HCT116 (cell line): ENCODE measurements at regions of chr22 and their contacts with region 1.

Region 1: GRCh38 chr22:17501679-17502285 is 61.5 kb upstream of the SLC25A18 start:
- DNase-seq: peak; percentile 69
- ATAC-seq: peak; percentile 93
- H3K4me3 ChIP-seq: no peak overlapping the region
- H3K27ac ChIP-seq: no peak overlapping the region
- H3K4me1 ChIP-seq: no peaks in the 10 kb centered on the region
- H3K27me3 ChIP-seq: no peaks in the 10 kb centered on the region
- CTCF ChIP-seq: peak; percentile 55 to 69 (median 68); a peak in 5 of 6 replicates
- POLR2A ChIP-seq: no peak
- RAD21 ChIP-seq: peak; percentile 84

Region 2: GRCh38 chr22:17057959-17058814 is 443.6 kb before region 1 on chr22:
- CTCF ChIA-PET with region 1: interaction called, 14 read pairs
- POLR2A ChIA-PET with region 1: no interaction called
- RAD21 ChIA-PET with region 1: no interaction called
- intact Hi-C with region 1: no loop called
- DNase-seq: peak; percentile 45
- ATAC-seq: peak; percentile 95
- H3K4me3 ChIP-seq: no peak overlapping the region
- H3K27ac ChIP-seq: no peak overlapping the region
- H3K4me1 ChIP-seq: no peaks in the 10 kb centered on the region
- H3K27me3 ChIP-seq: no peaks in the 10 kb centered on the region
- CTCF ChIP-seq: peak; percentile 53 to 96 (median 94); a peak in 5 of 6 replicates
- POLR2A ChIP-seq: no peak
- RAD21 ChIP-seq: peak; percentile 64

Region 3: GRCh38 chr22:17084554-17085276 is 417.1 kb before region 1 on chr22 and contains the start of gene IL17RA:
- CTCF ChIA-PET with region 1: interaction called, 4 read pairs
- POLR2A ChIA-PET with region 1: no interaction called
- RAD21 ChIA-PET with region 1: no interaction called
- intact Hi-C with region 1: loop called (anchors 2 kb)
- DNase-seq: peak; percentile 66
- ATAC-seq: peak; percentile 98
- H3K4me3 ChIP-seq: peak within 1 kb of the TSS; percentile 77 to 91
- H3K27ac ChIP-seq: peak within 1 kb of the TSS; percentile 93
- H3K4me1 ChIP-seq: peaks cover 10 to 20% of the 10 kb centered on the region in 2 experiments; a peak in 3 of 4 replicates
- H3K27me3 ChIP-seq: no peaks in the 10 kb centered on the region
- CTCF ChIP-seq: no peak
- POLR2A ChIP-seq: peak; percentile 73
- RAD21 ChIP-seq: no peak
- total RNA-seq, gene IL17RA: 17.3 TPM

Region 4: DNA sequence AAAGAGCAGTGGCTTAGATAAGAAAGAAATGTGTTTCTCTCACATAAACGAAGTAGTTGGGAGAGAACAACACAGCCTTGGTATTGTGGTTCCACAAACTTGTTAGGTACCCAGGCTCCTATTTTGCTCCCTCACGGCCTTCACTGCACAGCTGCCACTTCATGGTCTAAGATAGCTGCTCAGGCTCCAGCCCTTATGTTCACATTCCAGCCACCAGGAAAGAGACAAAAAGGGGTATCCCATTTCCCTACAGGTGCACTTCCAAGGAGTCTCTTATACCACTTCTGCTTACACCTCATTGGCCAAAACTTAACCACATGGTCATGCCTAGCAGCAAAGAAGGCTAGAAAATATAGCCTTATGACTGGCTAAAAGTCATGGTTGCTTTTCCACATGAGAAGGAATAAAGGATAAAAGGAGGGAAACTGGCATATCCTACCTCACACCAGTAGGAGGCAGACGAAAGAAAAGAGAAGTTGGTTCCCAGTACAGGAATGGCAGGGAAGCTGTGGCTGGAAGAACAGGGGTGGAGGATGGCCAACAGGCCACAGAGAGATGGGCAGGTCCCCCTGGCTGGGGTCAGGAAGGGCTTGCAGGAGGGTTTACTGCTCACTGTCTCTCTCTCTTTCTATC is 337.3 kb before region 1 on chr22:
- CTCF ChIA-PET with region 1: interaction called, 15 read pairs
- POLR2A ChIA-PET with region 1: no interaction called
- RAD21 ChIA-PET with region 1: interaction called in 1 of 2 experiments, 4 read pairs
- intact Hi-C with region 1: loop called (anchors 5 kb)
- DNase-seq: peak; percentile 37
- ATAC-seq: peak; percentile 63
- H3K4me3 ChIP-seq: no peak overlapping the region
- H3K27ac ChIP-seq: no peak overlapping the region
- H3K4me1 ChIP-seq: peaks cover 9 to 10% of the 10 kb centered on the region in 2 experiments; a peak in 3 of 4 replicates
- H3K27me3 ChIP-seq: no peaks in the 10 kb centered on the region
- CTCF ChIP-seq: peak; percentile 33 to 69 (median 47); a peak in 5 of 6 replicates
- POLR2A ChIP-seq: no peak
- RAD21 ChIP-seq: no peak

Region 5: DNA sequence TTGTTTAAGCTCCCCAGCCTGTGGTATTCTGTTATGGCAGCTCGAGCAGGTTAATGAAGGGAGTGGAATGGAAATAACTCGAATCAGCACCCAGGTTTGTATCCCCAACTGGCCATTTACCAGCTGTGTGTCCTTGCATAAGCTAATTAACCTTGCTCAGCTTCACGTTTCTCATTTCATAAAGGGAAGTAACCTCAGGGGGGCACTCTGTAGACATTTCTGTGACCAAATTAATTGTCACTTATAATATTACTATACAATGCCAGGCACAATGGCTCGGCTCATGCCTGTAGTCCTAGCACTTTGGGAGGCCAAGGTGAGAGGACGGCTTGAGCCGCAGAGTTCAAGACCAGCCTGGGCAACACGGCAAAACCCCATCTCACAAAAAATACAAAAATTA is 296.4 kb before region 1 on chr22:
- CTCF ChIA-PET with region 1: interaction called, 58 read pairs
- POLR2A ChIA-PET with region 1: no interaction called
- RAD21 ChIA-PET with region 1: interaction called, 6 to 13 read pairs
- intact Hi-C with region 1: loop called (anchors 2 kb)
- DNase-seq: no peak
- ATAC-seq: peak; percentile 83
- H3K4me3 ChIP-seq: no peak overlapping the region
- H3K27ac ChIP-seq: no peak overlapping the region
- H3K4me1 ChIP-seq: no peaks in the 10 kb centered on the region
- H3K27me3 ChIP-seq: no peaks in the 10 kb centered on the region
- CTCF ChIP-seq: peak; percentile 5 to 28 (median 15); a peak in 4 of 6 replicates
- POLR2A ChIP-seq: no peak
- RAD21 ChIP-seq: peak; percentile 42

Region 6: GRCh38 chr22:17368554-17369438 is 133.0 kb before region 1 on chr22:
- CTCF ChIA-PET with region 1: interaction called, 5 read pairs
- POLR2A ChIA-PET with region 1: no interaction called
- RAD21 ChIA-PET with region 1: interaction called in 1 of 2 experiments, 4 read pairs
- intact Hi-C with region 1: loop called (anchors 2 kb)
- DNase-seq: peak; percentile 34
- ATAC-seq: peak; percentile 73
- H3K4me3 ChIP-seq: peak overlapping the region; percentile 59 to 70
- H3K27ac ChIP-seq: peak overlapping the region; percentile 62; the same call in 1 of the 2 replicates
- H3K4me1 ChIP-seq: peaks cover 21 to 26% of the 10 kb centered on the region in 2 experiments; a peak in 3 of 4 replicates
- H3K27me3 ChIP-seq: no peaks in the 10 kb centered on the region
- CTCF ChIP-seq: no peak
- POLR2A ChIP-seq: no peak
- RAD21 ChIP-seq: no peak